Sigmoid colon (tissue), 7 donors: ENCODE measurements at regions of chr1 and their contacts with region 1.

Region 1: DNA sequence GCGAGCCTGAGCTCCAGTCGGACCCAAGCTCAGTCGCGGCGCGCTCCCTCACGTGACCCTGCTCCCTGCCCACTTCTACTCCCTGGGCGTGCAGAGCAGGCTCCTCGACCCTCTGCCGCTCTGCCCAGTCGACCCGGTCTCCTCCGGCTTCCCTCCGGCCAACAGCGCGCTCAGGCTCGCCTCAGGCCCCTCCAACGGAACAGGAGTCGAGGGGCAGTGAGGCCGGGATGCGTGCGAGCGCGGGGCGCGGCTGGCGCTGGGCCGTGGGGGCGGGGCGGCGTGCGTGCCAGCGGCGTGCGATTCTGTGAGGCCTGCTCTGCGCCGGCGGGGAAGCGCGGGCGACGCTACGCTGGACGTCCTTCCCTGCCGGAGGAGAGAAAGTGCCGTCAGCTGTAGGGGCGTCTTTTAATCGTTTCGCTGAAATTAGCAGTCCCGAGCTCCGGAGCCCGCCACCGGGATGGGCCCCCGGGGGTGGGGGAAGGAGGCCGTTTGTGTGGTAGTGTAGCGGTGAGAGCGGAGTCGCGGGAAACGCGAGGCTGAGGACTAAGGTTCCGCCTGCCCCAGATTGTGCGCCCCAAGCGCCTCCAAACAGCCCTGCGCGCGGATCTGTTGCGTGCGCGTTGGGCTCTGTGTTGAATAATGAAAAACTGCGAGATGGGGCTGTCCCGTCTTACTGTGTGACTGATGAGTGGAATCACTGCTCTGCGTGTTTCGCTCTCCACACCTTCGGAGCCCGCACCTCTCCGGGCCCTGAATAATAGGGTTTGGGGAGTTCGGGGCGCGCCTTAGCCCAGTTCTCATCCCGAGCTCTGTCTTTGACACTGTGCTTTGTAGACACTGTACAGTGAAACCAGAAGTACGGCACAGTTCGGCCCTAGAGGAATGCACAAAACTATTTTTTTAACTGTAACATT is at the start of gene ACBD6:
- DNase-seq: peak; percentile 92
- H3K4me3 ChIP-seq: peak within 1 kb of the TSS; percentile 74 to 93 (median 84)
- H3K27ac ChIP-seq: peak within 1 kb of the TSS; percentile 86 to 96 (median 90)
- H3K4me1 ChIP-seq: peaks cover 0 to 24% (median 15%) of the 10 kb centered on the region in 4 donors
- H3K27me3 ChIP-seq: no peaks in the 10 kb centered on the region
- CTCF ChIP-seq: no peak
- EP300 ChIP-seq: peak in 1 of 4 donors; percentile 13
- POLR2A ChIP-seq: peak in 1 of 2 donors; percentile 38
- total RNA-seq, gene ACBD6: 35.5 to 40.8 (median 40.1) TPM

Region 2: GRCh38 chr1:180287988-180288705 is 214.5 kb before region 1 on chr1:
- intact Hi-C with region 1: no loop called
- DNase-seq: no peak
- H3K4me3 ChIP-seq: no peak overlapping the region
- H3K27ac ChIP-seq: peak overlapping the region in 1 of 4 donors; percentile 1
- H3K4me1 ChIP-seq: no peaks in the 10 kb centered on the region
- H3K27me3 ChIP-seq: no peaks in the 10 kb centered on the region
- CTCF ChIP-seq: no peak
- EP300 ChIP-seq: no peak
- POLR2A ChIP-seq: no peak

Region 3: GRCh38 chr1:181033799-181034451 is 531.3 kb after region 1 on chr1 and contains the start of gene MR1:
- intact Hi-C with region 1: loop called (anchors 10 kb)
- DNase-seq: no peak
- H3K4me3 ChIP-seq: peak within 1 kb of the TSS; percentile 36 to 52 (median 49)
- H3K27ac ChIP-seq: peak within 1 kb of the TSS; percentile 88 to 92 (median 92)
- H3K4me1 ChIP-seq: peaks cover 0 to 48% (median 28%) of the 10 kb centered on the region in 4 donors
- H3K27me3 ChIP-seq: no peaks in the 10 kb centered on the region
- CTCF ChIP-seq: no peak
- EP300 ChIP-seq: no peak
- POLR2A ChIP-seq: peak in 1 of 2 donors; percentile 68
- total RNA-seq, gene MR1: 10.3 to 12.2 (median 11.0) TPM